ENCODE measurements at regions of chr16 and their contacts with region 1.

Region 1: DNA sequence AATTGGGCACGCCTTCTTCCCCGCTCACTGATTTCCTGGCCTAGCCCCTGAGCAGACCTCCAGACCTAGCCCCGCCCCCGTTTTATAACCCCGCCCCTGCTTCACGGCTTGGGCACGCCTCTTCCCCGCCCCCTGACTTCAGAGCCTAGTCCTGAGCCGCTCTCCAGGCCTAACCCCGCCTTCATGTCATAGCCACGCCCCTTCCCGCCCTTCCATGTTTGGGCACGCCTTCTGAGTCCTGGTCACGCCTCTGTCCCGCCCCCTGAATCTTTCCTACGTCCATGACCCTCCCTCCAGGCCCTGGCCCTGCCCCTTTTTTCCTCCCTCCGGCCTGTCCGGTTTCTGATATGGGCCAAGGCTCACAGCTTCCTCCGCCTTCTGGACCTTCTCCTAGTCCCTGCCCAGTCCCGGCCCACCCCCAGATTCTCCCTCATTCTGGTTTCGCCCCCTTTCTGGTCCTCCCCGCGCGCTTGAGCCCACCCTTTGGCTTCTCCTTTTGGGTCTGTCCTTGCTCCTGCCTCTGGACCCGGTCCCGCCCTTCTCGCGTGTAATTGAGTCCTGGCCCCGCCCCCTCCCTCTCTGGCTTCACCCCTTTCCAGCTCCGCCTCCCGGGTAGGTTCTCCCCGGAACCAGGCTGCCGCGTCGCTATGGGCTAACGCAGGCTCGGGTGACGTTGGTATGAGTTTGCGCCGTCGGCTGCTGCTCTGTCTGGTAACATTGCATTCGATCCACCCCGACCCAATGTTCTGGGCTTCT is 15.1 kb upstream of the EEF2K start:
- DNase-seq: peak; percentile 100
- H3K4me3 Mint-ChIP-seq: peak overlapping the region; percentile 86
- H3K27ac Mint-ChIP-seq: peak overlapping the region; percentile 100
- H3K4me1 Mint-ChIP-seq: peaks cover 59% of the 10 kb centered on the region
- H3K27me3 Mint-ChIP-seq: peaks cover 8% of the 10 kb centered on the region

Region 2: DNA sequence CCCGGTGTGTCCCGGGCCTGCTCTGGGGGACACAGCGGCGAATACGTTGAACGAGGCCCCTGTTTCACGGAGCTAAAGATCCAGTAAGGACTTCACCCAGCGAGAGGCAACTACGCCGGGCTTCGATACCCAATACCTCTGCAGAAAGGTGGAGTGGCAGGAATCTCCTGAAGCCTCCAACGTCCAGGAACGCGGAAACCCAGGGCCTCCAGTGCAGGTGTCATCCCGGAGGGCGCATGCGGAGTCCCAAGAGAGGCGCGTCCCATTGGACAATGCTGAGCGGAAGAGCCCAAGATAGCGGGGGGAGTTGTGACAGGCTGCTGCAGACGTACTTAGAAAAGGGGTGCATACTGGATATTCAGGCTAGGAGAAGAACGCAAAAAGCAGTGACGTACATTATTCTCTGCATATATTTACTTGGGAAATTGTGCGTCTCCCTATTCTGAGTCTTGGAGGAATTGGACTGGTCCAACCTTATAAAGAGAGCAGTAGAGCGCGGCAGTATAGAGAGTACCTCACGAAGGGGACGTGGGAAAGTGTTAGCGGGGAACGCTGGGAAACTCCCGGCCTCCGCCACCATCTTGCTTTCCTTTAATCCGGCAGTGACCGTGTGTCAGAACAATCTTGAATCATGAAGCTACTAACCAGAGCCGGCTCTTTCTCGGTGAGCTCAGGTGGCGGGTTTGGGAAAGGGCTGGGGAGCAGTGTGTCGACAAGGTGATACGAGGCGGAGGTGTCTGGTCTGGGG is 238.0 kb before region 1 on chr16 and contains the start of gene UQCRC2:
- CTCF ChIA-PET with region 1: interaction called, 15 read pairs
- DNase-seq: peak; percentile 91
- H3K4me3 Mint-ChIP-seq: peak within 1 kb of the TSS; percentile 99
- H3K27ac Mint-ChIP-seq: peak within 1 kb of the TSS; percentile 97
- H3K4me1 Mint-ChIP-seq: peaks cover 67% of the 10 kb centered on the region
- H3K27me3 Mint-ChIP-seq: no peaks in the 10 kb centered on the region

Region 3: DNA sequence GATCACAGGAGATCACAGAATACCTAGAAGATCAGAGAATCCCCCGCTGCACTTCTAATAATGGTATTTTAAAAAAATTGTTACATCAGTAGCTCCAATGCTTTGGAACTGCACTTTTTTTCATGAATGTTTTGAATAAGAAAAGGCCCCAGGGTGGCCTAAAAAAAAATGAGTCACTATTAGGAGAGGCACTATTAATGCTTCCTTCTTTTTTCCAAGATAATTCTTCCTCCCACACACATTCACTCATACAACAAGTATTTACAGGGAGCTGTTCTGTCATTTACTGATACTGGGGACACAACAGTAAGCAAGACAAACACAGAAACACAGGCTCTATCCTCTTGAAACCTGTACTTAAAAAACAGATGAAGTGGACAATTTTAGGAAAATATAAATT is 189.4 kb before region 1 on chr16:
- CTCF ChIA-PET with region 1: interaction called, 46 read pairs
- DNase-seq: no peak
- H3K4me3 Mint-ChIP-seq: no peak overlapping the region
- H3K27ac Mint-ChIP-seq: no peak overlapping the region
- H3K4me1 Mint-ChIP-seq: peaks cover 8% of the 10 kb centered on the region
- H3K27me3 Mint-ChIP-seq: peaks cover 37% of the 10 kb centered on the region

Region 4: GRCh38 chr16:22077700-22078313 is 113.1 kb before region 1 on chr16:
- CTCF ChIA-PET with region 1: interaction called, 26 read pairs
- DNase-seq: peak; percentile 82
- H3K4me3 Mint-ChIP-seq: no peak overlapping the region
- H3K27ac Mint-ChIP-seq: no peak overlapping the region
- H3K4me1 Mint-ChIP-seq: no peaks in the 10 kb centered on the region
- H3K27me3 Mint-ChIP-seq: no peaks in the 10 kb centered on the region

Region 5: GRCh38 chr16:22206013-22206841 is 15.3 kb after region 1 on chr16 and contains the start of gene EEF2K:
- CTCF ChIA-PET with region 1: interaction called, 19 read pairs
- DNase-seq: peak; percentile 89
- H3K4me3 Mint-ChIP-seq: peak within 1 kb of the TSS; percentile 95
- H3K27ac Mint-ChIP-seq: peak within 1 kb of the TSS; percentile 76
- H3K4me1 Mint-ChIP-seq: peaks cover 53% of the 10 kb centered on the region
- H3K27me3 Mint-ChIP-seq: no peaks in the 10 kb centered on the region

Measured in activated naive CD4-positive, alpha-beta T cell treated with anti-CD3 and anti-CD28 coated beads, Interleukin-2, amount 10 ng/mL, durations not matched to agents 7 days and 5 days (primary cell).